ENCODE measurements at regions of chr12 and their contacts with region 1.

Region 1: DNA sequence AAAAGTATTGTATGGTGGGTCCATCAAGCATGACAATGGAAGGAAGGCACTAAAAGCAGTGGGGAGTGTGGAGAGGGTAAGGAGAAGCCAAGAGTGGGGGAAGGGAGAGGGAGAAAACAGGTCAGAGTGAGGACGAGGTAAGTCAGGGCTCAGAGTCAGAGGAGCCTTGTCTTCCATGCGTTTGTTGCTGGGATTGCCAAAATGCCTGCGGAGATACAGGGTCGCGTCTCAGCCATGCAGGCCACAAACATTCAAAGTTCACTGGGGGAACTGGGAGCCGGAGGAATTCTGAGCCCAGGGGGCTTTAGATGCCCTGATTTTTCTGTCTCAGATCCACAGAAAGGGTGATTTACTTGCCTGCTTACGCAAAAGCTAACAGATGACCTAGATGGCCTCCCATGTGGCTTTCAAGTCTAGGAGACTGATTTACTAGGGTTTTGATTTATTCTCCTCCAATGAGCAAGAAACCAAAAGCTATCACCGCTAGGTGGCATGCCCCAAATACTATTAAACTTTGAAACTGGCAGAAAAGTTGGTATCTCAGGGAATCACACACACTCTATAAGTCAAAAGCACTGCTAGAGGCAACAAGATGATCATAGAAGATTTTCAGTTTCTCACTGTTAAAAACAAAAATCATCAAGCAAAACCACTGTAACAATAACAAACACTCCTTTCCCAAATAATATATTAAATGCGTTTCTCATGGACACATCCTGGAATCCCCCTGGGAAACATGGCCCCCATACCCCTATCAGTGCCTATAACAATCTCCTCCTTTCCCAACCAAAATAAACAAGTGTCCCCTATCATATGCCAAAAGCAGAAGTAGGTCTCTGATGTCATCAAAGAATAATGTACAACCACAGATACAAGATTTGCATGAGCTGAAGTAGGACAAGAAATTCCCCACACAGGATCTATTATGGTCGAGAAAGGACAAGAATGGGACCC is 26.6 kb upstream of the MDM1 start:
- DNase-seq: peak; percentile 74
- ATAC-seq: peak; percentile 90
- H3K4me3 ChIP-seq: no peak overlapping the region
- H3K27ac ChIP-seq: peak overlapping the region; percentile 72
- H3K4me1 ChIP-seq: peaks cover 14% of the 10 kb centered on the region
- H3K27me3 ChIP-seq: no peaks in the 10 kb centered on the region
- CTCF ChIP-seq: peak; percentile 56 to 69 (median 66)
- EP300 ChIP-seq: peak; percentile 83; a peak in 3 of 4 replicates
- POLR2A ChIP-seq: no peak
- RAD21 ChIP-seq: peak; percentile 83

Region 2: DNA sequence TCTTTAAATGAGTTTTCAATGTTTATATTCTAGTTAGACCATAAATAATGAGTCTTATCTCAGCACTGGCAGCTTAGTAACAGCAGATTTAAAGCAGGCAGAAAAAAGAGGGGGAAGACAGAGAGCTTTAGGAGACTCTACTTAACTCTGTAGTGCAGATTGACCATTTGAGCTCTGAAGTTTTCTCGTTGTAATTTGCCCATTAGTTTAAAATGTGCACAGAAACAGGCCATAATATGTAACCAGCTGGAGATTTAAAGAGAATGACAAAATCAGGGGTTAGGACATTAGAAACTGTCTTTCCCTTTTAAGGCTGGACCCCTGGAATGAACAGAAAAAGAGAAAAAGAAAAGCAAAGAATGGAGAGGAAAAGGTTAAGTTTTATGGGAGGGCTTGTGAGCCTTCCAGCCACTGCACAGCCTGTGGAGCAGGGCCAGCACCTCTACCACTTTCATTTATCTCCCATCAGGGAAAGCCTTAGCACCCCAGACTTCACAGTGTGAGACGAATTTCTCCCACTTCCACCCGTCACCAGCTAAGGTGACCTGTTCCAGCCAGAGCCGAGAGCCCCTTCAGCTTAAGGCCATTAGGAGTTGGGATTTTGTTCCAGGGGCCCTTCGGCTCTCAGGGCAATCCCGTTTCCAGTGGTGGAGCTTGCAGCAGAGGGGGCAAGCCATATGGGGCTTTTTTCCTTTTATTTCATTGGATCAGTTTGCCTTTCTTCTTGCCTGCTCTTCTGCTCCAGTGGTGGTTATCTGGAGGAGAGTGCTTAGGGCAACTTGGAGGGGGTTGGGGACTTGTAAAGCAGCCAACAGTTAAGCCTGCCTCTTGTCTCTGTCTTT is 113.4 kb before region 1 on chr12:
- CTCF ChIA-PET with region 1: no interaction called
- POLR2A ChIA-PET with region 1: no interaction called
- RAD21 ChIA-PET with region 1: no interaction called
- SMC1A ChIA-PET with region 1: no interaction called
- in situ Hi-C with region 1: no loop called
- intact Hi-C with region 1: no loop called
- DNase-seq: no peak
- ATAC-seq: no peak
- H3K4me3 ChIP-seq: no peak overlapping the region
- H3K27ac ChIP-seq: no peak overlapping the region
- H3K4me1 ChIP-seq: peaks cover 10% of the 10 kb centered on the region
- H3K27me3 ChIP-seq: no peaks in the 10 kb centered on the region
- CTCF ChIP-seq: no peak
- EP300 ChIP-seq: no peak
- POLR2A ChIP-seq: no peak
- RAD21 ChIP-seq: no peak

Region 3: DNA sequence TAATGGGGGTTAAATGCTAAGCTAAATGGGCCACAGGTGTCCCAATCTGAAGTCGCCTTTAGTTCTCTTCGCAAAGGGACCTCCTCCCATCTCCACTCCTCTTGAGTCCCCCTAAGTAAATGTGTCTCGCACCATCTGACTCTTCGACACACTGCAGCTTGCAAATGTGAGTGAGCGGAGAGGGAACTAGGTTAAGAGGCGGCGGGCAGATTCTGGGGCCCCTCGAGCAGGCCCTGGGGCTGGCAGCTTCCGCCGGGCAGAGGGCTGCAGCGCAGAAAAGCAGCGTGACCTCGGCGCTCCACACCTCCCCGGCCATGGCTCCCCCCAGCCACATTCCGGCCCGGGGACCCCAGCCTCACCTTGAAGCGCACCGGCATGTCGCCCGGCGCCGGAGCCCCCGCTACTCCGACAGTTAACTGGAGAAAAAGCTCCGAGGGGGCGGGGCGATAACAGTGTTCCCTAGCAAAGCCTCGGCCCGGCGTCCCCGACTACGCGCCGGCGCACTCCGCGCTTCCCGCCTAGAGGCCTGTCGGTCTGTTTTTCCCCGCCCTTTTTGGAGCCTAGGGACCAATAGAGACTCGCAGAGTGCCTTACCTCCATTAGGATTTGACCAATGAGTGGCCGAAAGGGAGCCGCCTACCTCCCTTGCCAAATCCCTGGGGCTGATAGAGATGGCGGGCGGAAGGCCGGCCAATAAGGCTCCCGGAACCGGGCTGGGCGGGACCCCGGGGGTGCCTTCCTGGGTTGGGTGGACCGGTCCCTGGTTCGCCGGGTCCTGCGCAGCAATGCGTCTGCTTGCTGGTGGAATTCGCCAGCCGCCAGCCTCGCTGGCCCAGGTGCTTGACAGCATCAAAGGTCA is 26.7 kb before region 1 on chr12 and contains the start of gene MDM1:
- CTCF ChIA-PET with region 1: interaction called, 3 read pairs
- POLR2A ChIA-PET with region 1: no interaction called
- RAD21 ChIA-PET with region 1: interaction called, 4 read pairs
- SMC1A ChIA-PET with region 1: interaction called, 10 read pairs
- in situ Hi-C with region 1: no loop called
- intact Hi-C with region 1: no loop called
- DNase-seq: peak; percentile 92
- ATAC-seq: peak; percentile 98
- H3K4me3 ChIP-seq: peak within 1 kb of the TSS; percentile 83
- H3K27ac ChIP-seq: peak within 1 kb of the TSS; percentile 57
- H3K4me1 ChIP-seq: no peaks in the 10 kb centered on the region
- H3K27me3 ChIP-seq: no peaks in the 10 kb centered on the region
- CTCF ChIP-seq: no peak
- EP300 ChIP-seq: no peak
- POLR2A ChIP-seq: peak; percentile 82
- RAD21 ChIP-seq: no peak
- polyA plus RNA-seq, gene MDM1: 10.1 to 10.6 TPM

Region 4: GRCh38 chr12:68440068-68440581 is 81.3 kb after region 1 on chr12:
- CTCF ChIA-PET with region 1: interaction called, 14 read pairs
- POLR2A ChIA-PET with region 1: interaction called, 16 read pairs
- RAD21 ChIA-PET with region 1: interaction called, 37 read pairs
- SMC1A ChIA-PET with region 1: interaction called, 21 read pairs
- in situ Hi-C with region 1: no loop called
- intact Hi-C with region 1: no loop called
- DNase-seq: no peak
- ATAC-seq: peak; percentile 38
- H3K4me3 ChIP-seq: no peak overlapping the region
- H3K27ac ChIP-seq: no peak overlapping the region
- H3K4me1 ChIP-seq: peaks cover 7% of the 10 kb centered on the region
- H3K27me3 ChIP-seq: no peaks in the 10 kb centered on the region
- CTCF ChIP-seq: no peak
- EP300 ChIP-seq: no peak
- POLR2A ChIP-seq: no peak
- RAD21 ChIP-seq: no peak

Region 5: GRCh38 chr12:68617160-68617926 is 258.5 kb after region 1 on chr12:
- CTCF ChIA-PET with region 1: interaction called, 11 read pairs
- POLR2A ChIA-PET with region 1: interaction called, 6 read pairs
- RAD21 ChIA-PET with region 1: interaction called, 8 read pairs
- SMC1A ChIA-PET with region 1: interaction called, 36 read pairs
- in situ Hi-C with region 1: loop called (anchors 25 kb)
- intact Hi-C with region 1: loop called (anchors 2 kb)
- DNase-seq: no peak
- ATAC-seq: no peak
- H3K4me3 ChIP-seq: no peak overlapping the region
- H3K27ac ChIP-seq: no peak overlapping the region
- H3K4me1 ChIP-seq: peaks cover 23% of the 10 kb centered on the region
- H3K27me3 ChIP-seq: no peaks in the 10 kb centered on the region
- CTCF ChIP-seq: no peak
- EP300 ChIP-seq: no peak
- POLR2A ChIP-seq: no peak
- RAD21 ChIP-seq: no peak

Region 6: GRCh38 chr12:68686595-68687521 is 328.0 kb after region 1 on chr12 and contains the start of gene NUP107:
- CTCF ChIA-PET with region 1: interaction called, 16 read pairs
- POLR2A ChIA-PET with region 1: interaction called, 3 read pairs
- RAD21 ChIA-PET with region 1: interaction called, 6 read pairs
- SMC1A ChIA-PET with region 1: interaction called, 20 read pairs
- in situ Hi-C with region 1: no loop called
- intact Hi-C with region 1: loop called (anchors 5 kb)
- DNase-seq: peak; percentile 95
- ATAC-seq: peak; percentile 97
- H3K4me3 ChIP-seq: peak within 1 kb of the TSS; percentile 91
- H3K27ac ChIP-seq: peak within 1 kb of the TSS; percentile 83
- H3K4me1 ChIP-seq: peaks cover 9% of the 10 kb centered on the region
- H3K27me3 ChIP-seq: no peaks in the 10 kb centered on the region
- CTCF ChIP-seq: no peak
- EP300 ChIP-seq: no peak
- POLR2A ChIP-seq: peak; percentile 94
- RAD21 ChIP-seq: 0 out of 2 replicates have a peak, but pooled peaks have one; percentile 10
- polyA plus RNA-seq, gene NUP107: 79.4 to 85.2 TPM

Measured in GM12878 (cell line).